HepG2 (cell line): ENCODE measurements at regions of chr12 and their contacts with region 1.

Region 1: DNA sequence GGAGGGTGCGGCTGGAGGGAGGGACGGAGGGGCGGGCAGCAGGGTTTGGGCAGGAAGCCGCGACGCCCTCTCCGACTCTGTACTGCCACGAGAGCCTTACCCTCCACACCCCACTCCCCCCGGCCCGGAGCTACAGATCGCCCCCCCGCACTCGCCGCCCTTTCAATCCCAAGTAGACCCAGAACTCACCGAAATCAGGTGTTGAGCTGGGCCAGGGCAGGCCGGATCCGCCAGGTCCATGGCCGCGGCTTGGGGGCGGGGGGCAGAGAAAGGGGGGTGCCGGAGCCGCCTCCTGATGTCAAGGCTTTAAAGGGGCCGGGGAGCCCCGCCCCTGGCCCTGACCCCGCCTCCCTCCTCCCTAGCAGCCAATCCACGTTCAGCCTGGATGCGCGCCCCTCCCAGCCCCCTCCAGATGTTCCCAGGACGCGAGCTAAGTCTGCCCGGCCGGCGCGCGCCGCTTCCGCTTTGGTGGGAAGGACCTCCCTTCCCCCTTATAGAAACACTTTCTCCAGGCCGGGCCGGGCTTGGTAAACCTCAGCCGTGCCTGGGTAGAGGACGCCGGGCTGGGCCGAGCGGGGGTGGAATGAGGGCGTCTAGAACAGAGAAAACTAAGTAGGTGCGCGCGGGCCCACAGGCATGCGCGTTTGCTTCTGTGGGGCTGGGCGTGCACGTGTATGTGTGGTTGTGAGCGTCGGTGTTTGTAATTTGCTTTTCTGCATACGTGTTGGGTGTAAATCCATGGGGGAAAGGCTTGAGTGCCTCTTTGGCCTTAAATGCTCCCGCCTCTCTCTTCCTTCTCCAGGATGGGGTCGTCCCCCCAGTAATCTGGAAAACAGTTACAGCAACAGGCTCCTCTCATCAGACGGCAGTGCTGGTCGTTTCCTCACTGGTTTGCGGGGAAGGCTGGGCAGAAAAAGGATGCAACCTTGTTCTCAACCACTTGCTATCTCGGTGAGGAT is at the start of gene NCKAP5L:
- DNase-seq: peak; percentile 91
- ATAC-seq: peak; percentile 89
- H3K4me3 ChIP-seq: peak within 1 kb of the TSS; percentile 72 to 94 (median 90)
- H3K27ac ChIP-seq: peak within 1 kb of the TSS; percentile 84
- H3K4me1 ChIP-seq: peaks cover 63% of the 10 kb centered on the region
- H3K27me3 ChIP-seq: no peaks in the 10 kb centered on the region; a peak in 1 of 5 replicates
- CTCF ChIP-seq: no peak
- EP300 ChIP-seq: no peak
- POLR2A ChIP-seq: peak; percentile 64 to 65
- RAD21 ChIP-seq: no peak
- total RNA-seq, gene NCKAP5L: 5.9 and 9.0 TPM in 2 replicates

Region 2: DNA sequence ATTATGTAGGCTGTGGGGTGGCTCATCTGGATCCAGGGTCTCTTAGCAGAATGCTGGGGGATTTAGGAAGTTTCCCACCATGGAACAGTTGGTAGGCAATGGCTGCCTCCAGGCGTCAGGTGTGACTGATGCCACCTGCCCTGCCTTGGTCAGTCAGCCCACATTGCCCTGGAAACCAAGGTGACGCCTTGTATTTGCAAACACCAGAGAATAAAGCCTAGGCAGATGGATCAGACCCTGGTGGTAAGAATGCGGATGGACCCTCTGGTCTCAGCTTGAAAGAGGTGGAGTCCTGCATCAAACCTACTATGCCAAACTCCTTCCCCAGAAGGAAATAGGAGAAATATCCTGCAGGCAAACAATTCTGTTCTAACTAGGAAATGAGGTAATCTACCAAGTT is 38.4 kb before region 1 on chr12:
- CTCF ChIA-PET with region 1: no interaction called
- POLR2A ChIA-PET with region 1: interaction called, 4 read pairs
- in situ Hi-C with region 1: loop called (anchors 5 kb)
- intact Hi-C with region 1: no loop called
- DNase-seq: peak; percentile 37
- ATAC-seq: peak; percentile 40
- H3K4me3 ChIP-seq: no peak overlapping the region
- H3K27ac ChIP-seq: no peak overlapping the region
- H3K4me1 ChIP-seq: no peaks in the 10 kb centered on the region
- H3K27me3 ChIP-seq: no peaks in the 10 kb centered on the region
- CTCF ChIP-seq: no peak
- EP300 ChIP-seq: no peak
- POLR2A ChIP-seq: no peak
- RAD21 ChIP-seq: no peak

Region 3: DNA sequence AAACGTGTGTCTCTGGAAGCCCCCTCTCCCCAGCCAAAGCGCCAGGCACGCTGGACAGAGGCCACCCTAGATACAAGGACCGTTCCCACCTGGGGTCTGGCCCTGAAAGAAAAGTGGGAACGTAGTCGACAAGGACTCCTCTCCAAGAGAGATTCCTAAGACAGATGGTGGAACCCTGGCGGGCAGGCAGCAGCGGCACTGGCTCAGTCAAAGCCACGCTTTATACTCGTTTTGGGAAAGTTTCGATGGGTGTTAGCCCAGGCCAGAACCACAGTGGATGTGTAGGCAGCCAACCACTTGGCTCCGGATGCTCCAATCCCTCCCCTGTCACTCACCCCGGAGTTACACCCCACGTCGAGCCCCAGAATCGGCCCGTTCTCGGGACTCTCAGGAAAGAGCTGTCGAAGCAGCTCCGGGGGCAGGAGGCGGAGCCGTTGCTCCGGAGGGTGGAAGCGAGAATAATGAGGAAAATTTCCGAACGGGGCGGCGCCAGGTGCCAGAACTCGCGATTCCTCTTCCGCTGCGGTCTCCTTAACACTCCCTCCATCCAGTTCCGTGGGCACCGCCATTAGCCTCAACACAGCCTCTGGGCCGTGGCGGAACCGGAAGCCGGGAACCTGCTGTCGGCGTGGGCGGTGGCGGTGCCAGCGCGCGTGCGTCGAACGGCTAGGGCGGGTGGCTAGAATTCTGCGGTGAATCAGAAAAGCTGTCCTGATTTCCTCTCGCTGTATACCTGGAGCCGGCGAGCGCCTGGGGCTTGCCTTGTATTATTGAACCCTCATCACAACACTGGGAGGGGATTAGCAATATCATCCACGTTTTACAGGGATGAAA is 14.3 kb after region 1 on chr12 and contains the start of gene BCDIN3D:
- CTCF ChIA-PET with region 1: interaction called, 3 read pairs
- POLR2A ChIA-PET with region 1: interaction called, 39 read pairs
- in situ Hi-C with region 1: no loop called
- intact Hi-C with region 1: no loop called
- DNase-seq: peak; percentile 83
- ATAC-seq: peak; percentile 97
- H3K4me3 ChIP-seq: peak within 1 kb of the TSS; percentile 94 to 99 (median 97)
- H3K27ac ChIP-seq: peak within 1 kb of the TSS; percentile 92
- H3K4me1 ChIP-seq: peaks cover 19% of the 10 kb centered on the region
- H3K27me3 ChIP-seq: peaks cover 0 to 3% of the 10 kb centered on the region in 2 experiments; a peak in 1 of 5 replicates
- CTCF ChIP-seq: no peak
- EP300 ChIP-seq: no peak
- POLR2A ChIP-seq: peak; percentile 75 to 83
- RAD21 ChIP-seq: no peak
- total RNA-seq, gene BCDIN3D: 1.8 and 2.5 TPM in 2 replicates

Region 4: DNA sequence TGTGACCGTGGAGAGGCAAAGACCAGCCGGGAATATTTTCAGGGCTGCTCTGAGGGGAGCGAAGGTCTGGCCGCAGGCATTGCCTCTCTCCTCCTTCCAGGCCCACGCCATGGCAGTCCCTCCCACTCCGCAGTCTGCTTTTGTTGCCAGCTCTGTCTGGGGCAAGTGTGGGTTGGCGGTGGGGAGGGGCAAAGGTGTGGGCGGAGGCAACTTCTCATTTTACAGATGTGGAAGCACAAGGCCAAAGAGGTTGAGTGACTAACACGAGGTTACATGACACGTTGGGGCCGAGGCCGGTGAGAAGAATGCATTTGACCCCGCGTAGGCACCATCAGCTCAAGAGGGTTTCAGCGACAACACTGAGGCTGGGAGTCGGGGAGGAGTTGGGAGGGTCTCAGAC is 81.4 kb after region 1 on chr12:
- CTCF ChIA-PET with region 1: no interaction called
- POLR2A ChIA-PET with region 1: no interaction called
- in situ Hi-C with region 1: no loop called
- intact Hi-C with region 1: no loop called
- DNase-seq: peak; percentile 35
- ATAC-seq: peak; percentile 56
- H3K4me3 ChIP-seq: no peak overlapping the region
- H3K27ac ChIP-seq: no peak overlapping the region
- H3K4me1 ChIP-seq: peaks cover 9% of the 10 kb centered on the region; the same call in 1 of the 2 replicates
- H3K27me3 ChIP-seq: peaks cover 6 to 25% of the 10 kb centered on the region in 2 experiments; a peak in 3 of 5 replicates
- CTCF ChIP-seq: no peak
- EP300 ChIP-seq: no peak
- POLR2A ChIP-seq: no peak
- RAD21 ChIP-seq: no peak

Region 5: DNA sequence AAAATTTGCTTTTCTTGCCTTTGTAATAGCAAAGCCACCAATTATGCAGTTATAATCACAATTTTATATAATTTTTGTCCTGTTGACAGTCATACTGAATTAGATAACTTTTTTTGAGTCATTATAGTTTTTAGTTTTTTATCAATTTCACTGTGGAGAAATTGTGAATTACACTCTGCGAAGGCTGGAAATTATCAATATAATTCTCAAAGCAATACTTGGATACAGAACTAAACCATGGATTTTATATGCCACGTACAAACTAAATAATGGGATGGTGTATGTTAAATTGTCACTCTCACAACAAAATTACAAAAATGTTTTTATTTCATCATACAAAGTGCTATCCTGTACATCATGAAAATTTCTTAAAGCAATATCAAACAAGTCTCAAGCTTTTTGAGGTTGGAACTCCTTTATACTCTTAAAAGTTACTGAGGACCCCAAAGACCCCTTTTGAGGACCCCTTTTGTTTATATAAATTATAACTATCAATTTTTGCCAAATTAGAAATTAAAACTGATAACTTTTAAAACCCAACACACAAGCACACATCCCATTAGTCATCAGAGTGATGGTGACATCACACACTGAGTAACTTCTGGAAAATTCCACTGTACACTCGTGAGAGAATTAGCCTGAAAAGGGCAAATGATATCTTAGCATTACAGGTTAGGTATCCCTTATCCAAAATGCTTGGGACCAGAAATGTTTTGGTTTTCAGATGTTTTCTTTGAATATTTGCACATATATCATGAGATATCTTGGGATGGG is 102.3 kb after region 1 on chr12:
- CTCF ChIA-PET with region 1: no interaction called
- POLR2A ChIA-PET with region 1: no interaction called
- in situ Hi-C with region 1: no loop called
- intact Hi-C with region 1: no loop called
- DNase-seq: no peak
- ATAC-seq: no peak
- H3K4me3 ChIP-seq: no peak overlapping the region
- H3K27ac ChIP-seq: no peak overlapping the region
- H3K4me1 ChIP-seq: no peaks in the 10 kb centered on the region
- H3K27me3 ChIP-seq: peaks cover 0 to 4% of the 10 kb centered on the region in 2 experiments; a peak in 1 of 5 replicates
- CTCF ChIP-seq: no peak
- EP300 ChIP-seq: no peak
- POLR2A ChIP-seq: no peak
- RAD21 ChIP-seq: no peak